ENCODE measurements at regions of chr5 and their contacts with region 1.

Region 1: GRCh38 chr5:32138839-32139493 is 35.2 kb downstream of the GOLPH3 start:
- DNase-seq: peak; percentile 92
- H3K4me3 Mint-ChIP-seq: peak overlapping the region; percentile 28
- H3K27ac Mint-ChIP-seq: peak overlapping the region; percentile 88
- H3K4me1 Mint-ChIP-seq: peaks cover 25% of the 10 kb centered on the region
- H3K27me3 Mint-ChIP-seq: no peaks in the 10 kb centered on the region

Region 2: GRCh38 chr5:32115985-32116384 is 23.0 kb before region 1 on chr5:
- CTCF ChIA-PET with region 1: interaction called, 3 read pairs
- POLR2A ChIA-PET with region 1: no interaction called
- intact Hi-C with region 1: loop called (anchors 2 kb)
- DNase-seq: no peak
- H3K4me3 Mint-ChIP-seq: no peak overlapping the region
- H3K27ac Mint-ChIP-seq: peak overlapping the region; percentile 29
- H3K4me1 Mint-ChIP-seq: peaks cover 41% of the 10 kb centered on the region
- H3K27me3 Mint-ChIP-seq: no peaks in the 10 kb centered on the region

Region 3: DNA sequence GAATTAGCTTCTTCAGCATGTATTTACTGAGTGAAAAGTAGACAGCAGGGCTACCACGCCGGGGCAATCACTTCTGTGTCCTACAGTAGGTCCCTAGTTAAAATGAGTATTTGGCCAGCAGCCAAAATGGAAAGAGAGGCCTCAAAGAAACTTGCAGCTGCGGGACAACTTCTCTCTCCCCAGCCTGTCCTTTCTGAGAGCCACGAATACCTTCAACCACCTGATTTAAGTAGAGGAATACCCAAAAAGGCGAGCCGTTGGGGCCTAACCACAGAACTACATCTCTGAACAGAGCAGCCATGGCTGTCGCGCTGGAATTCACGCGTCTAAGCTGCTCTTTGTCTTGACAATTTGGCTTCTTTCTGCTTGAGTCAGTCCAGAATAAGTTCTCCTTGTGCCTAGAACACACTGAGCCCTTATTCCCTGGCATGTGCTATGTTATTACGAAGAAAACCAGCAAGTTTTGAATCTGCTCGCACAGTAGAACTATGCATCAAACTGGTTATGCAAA is 79.0 kb after region 1 on chr5:
- CTCF ChIA-PET with region 1: no interaction called
- POLR2A ChIA-PET with region 1: no interaction called
- intact Hi-C with region 1: loop called (anchors 10 kb)
- DNase-seq: no peak
- H3K4me3 Mint-ChIP-seq: no peak overlapping the region
- H3K27ac Mint-ChIP-seq: no peak overlapping the region
- H3K4me1 Mint-ChIP-seq: no peaks in the 10 kb centered on the region
- H3K27me3 Mint-ChIP-seq: no peaks in the 10 kb centered on the region